ENCODE measurements at regions of chr19 and their contacts with region 1.

Region 1: DNA sequence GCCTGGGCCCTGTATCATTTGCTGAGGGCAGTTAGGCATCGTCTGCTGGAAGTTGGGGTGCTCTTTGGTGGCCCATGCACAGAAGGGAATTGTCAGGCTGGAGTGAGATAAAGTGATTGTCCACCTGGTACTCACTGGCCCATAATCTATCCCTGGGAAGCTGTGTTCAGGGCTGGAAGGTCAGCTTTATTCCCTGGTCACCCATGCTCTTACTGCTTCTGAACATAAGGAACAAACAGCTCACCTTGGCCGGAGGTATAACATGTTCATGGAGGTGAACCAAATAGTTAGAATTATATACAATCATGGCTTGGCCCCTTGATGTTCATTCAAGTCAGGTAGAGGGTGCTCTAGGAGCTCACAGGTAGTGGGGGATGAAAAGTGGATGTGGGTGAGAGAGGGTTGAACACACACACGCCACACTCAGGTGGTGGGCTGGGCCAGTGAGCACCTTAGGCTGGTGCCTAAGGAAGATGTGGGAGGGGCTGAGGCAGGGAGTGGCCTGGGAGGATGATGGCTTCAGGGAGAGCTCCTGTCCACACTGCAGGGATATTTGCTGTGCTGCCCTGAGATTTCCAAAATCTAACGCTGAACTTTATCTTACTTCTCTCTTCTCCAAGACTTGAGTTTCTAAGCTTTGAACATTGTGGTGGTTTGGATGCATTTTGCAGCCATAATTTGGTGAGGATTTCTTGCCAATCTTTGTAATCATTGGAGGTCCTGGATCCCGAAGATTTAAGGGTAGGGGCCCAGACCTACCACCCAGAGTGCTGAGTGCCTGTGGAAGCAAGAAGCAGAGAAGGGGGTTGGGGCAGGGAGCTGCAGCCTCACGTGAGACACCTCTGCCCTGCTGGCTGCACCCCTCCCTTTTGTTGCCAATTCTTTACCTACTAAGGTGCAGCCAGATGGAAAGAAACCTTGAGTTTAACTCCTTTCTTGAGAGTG is 420.6 kb downstream of the ZNF536 start:
- DNase-seq: no peak
- ATAC-seq: no peak
- H3K4me3 ChIP-seq: no peak overlapping the region
- H3K4me3 Mint-ChIP-seq: no peak overlapping the region
- H3K27ac ChIP-seq: no peak overlapping the region
- H3K27ac Mint-ChIP-seq: no peak overlapping the region
- H3K4me1 ChIP-seq: no peaks in the 10 kb centered on the region
- H3K4me1 Mint-ChIP-seq: no peaks in the 10 kb centered on the region
- H3K27me3 ChIP-seq: peaks cover 0 to 6% of the 10 kb centered on the region in 2 experiments
- H3K27me3 Mint-ChIP-seq: peaks cover 4 to 16% of the 10 kb centered on the region in 2 donors

Region 2: GRCh38 chr19:29753190-29753933 is 1039.5 kb before region 1 on chr19:
- CTCF ChIA-PET with region 1: no interaction called
- POLR2A ChIA-PET with region 1: no interaction called
- DNase-seq: no peak
- ATAC-seq: no peak
- H3K4me3 ChIP-seq: no peak overlapping the region
- H3K4me3 Mint-ChIP-seq: no peak overlapping the region
- H3K27ac ChIP-seq: no peak overlapping the region
- H3K27ac Mint-ChIP-seq: no peak overlapping the region
- H3K4me1 ChIP-seq: no peaks in the 10 kb centered on the region
- H3K4me1 Mint-ChIP-seq: no peaks in the 10 kb centered on the region
- H3K27me3 ChIP-seq: peaks cover 0 to 17% of the 10 kb centered on the region in 2 experiments
- H3K27me3 Mint-ChIP-seq: peaks cover 0 to 5% of the 10 kb centered on the region in 2 donors

Region 3: DNA sequence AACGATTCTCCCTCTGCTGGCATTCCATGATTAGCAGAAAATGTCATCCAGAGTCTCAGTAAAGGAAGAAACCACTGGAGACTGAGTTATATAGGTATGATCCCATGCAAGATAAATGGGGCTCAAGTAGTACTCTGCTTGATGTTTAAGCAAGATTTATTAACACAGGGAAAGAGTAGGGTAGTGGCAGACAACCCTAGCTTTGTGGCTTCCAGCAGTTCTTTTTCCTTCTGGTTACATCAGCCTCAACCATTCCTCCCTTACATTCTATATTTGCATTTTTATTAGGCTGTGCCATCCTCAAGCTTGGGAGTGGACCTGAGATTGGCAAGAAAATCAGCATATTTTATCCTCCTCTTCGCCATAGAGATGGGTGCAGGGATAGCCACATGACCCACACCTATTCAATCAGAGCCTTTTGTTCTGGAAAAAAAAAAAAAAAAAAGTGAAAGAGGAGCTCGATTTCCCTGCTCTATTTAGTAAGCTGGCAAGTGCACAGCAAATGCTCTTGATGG is 18.5 kb before region 1 on chr19:
- CTCF ChIA-PET with region 1: interaction called in 1 of 2 experiments, 10 read pairs
- POLR2A ChIA-PET with region 1: no interaction called
- DNase-seq: no peak
- ATAC-seq: no peak
- H3K4me3 ChIP-seq: no peak overlapping the region
- H3K4me3 Mint-ChIP-seq: no peak overlapping the region
- H3K27ac ChIP-seq: no peak overlapping the region
- H3K27ac Mint-ChIP-seq: no peak overlapping the region
- H3K4me1 ChIP-seq: no peaks in the 10 kb centered on the region
- H3K4me1 Mint-ChIP-seq: no peaks in the 10 kb centered on the region
- H3K27me3 ChIP-seq: peaks cover 0 to 8% of the 10 kb centered on the region in 2 experiments
- H3K27me3 Mint-ChIP-seq: peaks cover 3 to 5% of the 10 kb centered on the region in 2 donors

Region 4: DNA sequence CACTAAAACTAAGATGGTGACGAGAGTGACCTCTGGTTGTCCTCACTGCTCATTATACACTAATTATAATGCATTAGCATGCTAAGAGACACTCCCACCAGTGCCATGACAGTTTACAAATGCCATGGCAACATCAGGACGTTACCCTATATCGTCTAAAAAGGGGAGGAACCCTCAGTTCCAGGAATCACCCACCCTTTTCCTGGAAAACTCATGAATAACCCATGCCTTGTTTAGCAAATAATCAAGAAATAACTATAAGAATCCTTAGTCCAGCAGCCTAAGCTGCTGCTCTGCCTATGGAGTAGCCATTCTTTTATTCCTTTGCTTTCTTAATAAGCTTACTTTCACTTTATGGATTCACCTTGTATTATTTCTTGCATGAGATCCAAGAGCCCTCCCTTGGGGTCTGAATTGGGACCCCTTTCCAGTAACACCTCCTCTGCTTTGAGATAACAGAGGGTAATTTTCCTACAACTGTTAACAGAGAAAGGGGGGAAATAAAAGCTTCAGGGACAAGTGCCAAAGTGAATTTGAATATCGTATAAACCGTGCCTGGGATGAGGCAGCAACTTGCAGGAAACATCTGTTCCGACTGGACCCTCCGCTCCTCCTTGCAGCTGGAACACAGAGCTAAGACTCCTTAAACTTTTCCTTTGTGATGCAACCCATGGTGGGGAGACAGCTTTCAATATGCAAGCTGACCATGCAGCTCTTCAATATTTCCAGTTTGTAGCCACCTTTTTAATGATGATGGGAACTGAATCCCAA is 11.7 kb after region 1 on chr19:
- CTCF ChIA-PET with region 1: no interaction called
- POLR2A ChIA-PET with region 1: no interaction called
- DNase-seq: no peak
- ATAC-seq: no peak
- H3K4me3 ChIP-seq: no peak overlapping the region
- H3K4me3 Mint-ChIP-seq: no peak overlapping the region
- H3K27ac ChIP-seq: no peak overlapping the region
- H3K27ac Mint-ChIP-seq: no peak overlapping the region
- H3K4me1 ChIP-seq: no peaks in the 10 kb centered on the region
- H3K4me1 Mint-ChIP-seq: peaks cover 0 to 2% (median 0%) of the 10 kb centered on the region in 3 donors
- H3K27me3 ChIP-seq: peaks cover 0 to 16% of the 10 kb centered on the region in 2 experiments
- H3K27me3 Mint-ChIP-seq: peaks cover 14 to 26% of the 10 kb centered on the region in 2 donors

Region 5: GRCh38 chr19:30870876-30871275 is 78.0 kb after region 1 on chr19:
- CTCF ChIA-PET with region 1: no interaction called
- POLR2A ChIA-PET with region 1: no interaction called
- DNase-seq: no peak
- ATAC-seq: no peak
- H3K4me3 ChIP-seq: no peak overlapping the region
- H3K4me3 Mint-ChIP-seq: no peak overlapping the region
- H3K27ac ChIP-seq: no peak overlapping the region
- H3K27ac Mint-ChIP-seq: no peak overlapping the region
- H3K4me1 ChIP-seq: no peaks in the 10 kb centered on the region
- H3K4me1 Mint-ChIP-seq: no peaks in the 10 kb centered on the region
- H3K27me3 ChIP-seq: peaks cover 0 to 11% of the 10 kb centered on the region in 2 experiments
- H3K27me3 Mint-ChIP-seq: peaks cover 0 to 12% of the 10 kb centered on the region in 2 donors

Measured in T-cell (primary cell).